Caco-2 (cell line): ENCODE measurements at regions of chr6 and their contacts with region 1.

Region 1: DNA sequence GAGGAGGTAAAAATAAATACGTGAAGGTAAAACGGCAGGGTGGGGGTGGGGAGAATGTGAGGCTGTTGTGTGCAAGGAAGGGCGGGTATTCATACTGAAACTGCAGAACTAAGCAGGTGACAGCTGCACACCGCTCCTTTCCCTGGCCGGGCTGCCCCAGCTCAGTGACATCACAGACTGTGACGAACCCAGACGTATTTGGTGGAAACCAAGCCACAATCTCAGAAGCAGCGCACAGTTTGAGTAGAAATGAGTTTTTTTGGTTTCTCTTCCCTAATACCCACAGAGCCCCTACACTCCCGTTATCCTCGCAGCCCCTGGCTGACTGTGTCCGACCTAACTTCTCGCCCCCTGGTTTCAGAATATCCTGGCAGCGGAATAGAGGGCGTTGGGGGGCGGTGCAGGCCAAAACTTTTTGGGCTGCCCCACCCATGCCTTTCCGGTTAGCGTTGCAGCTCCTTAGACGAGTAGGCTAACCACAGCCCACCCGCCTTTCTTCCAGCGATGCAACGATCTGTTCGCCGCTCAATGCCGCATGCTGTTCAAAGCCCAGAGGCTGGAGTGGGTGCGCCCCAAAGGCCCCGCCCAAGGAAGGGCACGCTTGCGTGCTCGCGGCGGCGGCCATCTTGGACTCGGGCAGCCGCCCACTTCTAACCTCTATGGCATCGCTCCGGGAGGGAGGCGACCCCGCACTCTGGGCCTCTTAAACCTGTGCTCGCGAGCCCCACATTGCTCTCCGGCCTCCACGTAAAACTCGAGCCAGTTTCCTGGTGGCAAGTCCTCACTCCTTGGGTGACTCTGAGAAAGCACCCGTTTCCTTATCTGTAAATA is 9.1 kb downstream of the BAK1 start:
- DNase-seq: peak; percentile 73 to 82
- H3K4me3 ChIP-seq: peak overlapping the region; percentile 77
- H3K4me3 Mint-ChIP-seq: peak overlapping the region; percentile 98
- H3K27ac Mint-ChIP-seq: peak overlapping the region; percentile 96
- H3K4me1 ChIP-seq: no peaks in the 10 kb centered on the region
- H3K4me1 Mint-ChIP-seq: peaks cover 6% of the 10 kb centered on the region
- H3K27me3 ChIP-seq: no peaks in the 10 kb centered on the region
- H3K27me3 Mint-ChIP-seq: no peaks in the 10 kb centered on the region
- CTCF ChIP-seq: no peak

Region 2: DNA sequence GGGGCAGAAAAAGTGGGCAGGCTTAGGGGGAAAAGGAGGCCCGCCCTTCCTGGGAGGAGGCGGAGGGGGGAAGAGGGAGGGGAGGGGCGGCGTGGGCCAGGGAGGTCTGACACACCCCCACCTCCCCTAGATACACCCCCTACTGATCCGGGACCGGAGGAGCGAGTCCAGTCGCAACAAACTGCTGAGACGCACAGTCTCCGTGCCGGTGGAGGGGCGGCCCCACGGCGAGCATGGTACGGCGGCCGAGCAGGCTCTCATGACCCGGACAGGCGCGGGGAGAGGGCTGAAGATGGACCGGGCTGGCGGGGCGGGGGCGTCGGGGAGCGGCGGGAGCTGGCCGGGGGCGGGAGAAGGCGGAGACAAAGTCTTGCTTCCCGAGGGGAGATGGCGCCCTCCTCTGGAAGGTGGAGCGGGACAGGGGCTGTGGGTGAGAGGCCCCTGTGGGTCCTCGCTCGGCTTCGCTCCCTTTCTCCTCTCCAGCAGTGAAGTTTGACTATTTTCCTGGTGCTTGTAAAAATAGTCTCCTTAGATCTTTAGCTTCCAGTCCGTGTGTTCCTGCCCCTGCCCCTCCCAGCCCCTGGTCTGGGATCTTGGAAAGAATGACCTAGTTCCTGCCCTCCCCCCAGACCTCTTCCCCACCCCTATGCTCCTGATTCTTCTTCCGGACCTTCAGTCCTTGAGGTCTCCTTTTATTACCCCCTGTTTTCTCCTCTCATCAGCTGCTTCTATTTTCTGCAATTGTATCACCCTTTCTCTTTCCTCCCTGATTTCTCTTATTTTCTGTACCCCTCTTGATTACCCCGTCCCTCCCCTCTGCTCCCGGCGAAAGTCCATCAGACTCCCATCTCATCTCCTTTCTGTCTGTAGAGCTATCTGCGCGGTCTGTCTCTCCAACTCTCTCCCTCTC is 145.1 kb before region 1 on chr6:
- CTCF ChIA-PET with region 1: no interaction called
- POLR2A ChIA-PET with region 1: no interaction called
- intact Hi-C with region 1: loop called (anchors 5 kb)
- DNase-seq: peak; percentile 91 to 93
- H3K4me3 ChIP-seq: peak overlapping the region; percentile 71
- H3K4me3 Mint-ChIP-seq: peak overlapping the region; percentile 81
- H3K27ac Mint-ChIP-seq: peak overlapping the region; percentile 75
- H3K4me1 ChIP-seq: peaks cover 39% of the 10 kb centered on the region
- H3K4me1 Mint-ChIP-seq: peaks cover 23% of the 10 kb centered on the region
- H3K27me3 ChIP-seq: no peaks in the 10 kb centered on the region
- H3K27me3 Mint-ChIP-seq: peaks cover 7% of the 10 kb centered on the region
- CTCF ChIP-seq: peak; percentile 74 to 82

Region 3: DNA sequence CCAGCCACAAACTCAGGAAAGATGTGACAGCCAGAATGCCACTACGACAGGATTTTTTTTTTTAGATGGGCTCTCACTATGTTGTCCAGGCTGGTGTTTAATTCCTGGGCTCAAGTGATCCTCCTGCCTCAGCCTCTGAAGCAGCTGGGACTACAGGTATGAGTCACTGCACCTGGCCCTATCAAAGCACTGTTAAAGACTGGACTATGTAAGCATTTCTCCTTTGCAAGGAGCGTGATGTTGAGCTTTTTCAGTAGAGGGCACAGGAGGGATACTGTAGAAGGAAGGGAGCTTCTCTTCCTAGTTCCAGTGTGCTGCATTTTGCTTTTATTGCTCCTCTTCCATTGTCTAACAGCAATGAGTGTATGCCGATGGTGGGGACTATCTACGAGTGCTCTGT is 80.8 kb before region 1 on chr6:
- CTCF ChIA-PET with region 1: interaction called, 3 read pairs
- POLR2A ChIA-PET with region 1: no interaction called
- intact Hi-C with region 1: loop called (anchors 1 kb)
- DNase-seq: peak; percentile 48 to 53
- H3K4me3 ChIP-seq: no peak overlapping the region
- H3K4me3 Mint-ChIP-seq: no peak overlapping the region
- H3K27ac Mint-ChIP-seq: no peak overlapping the region
- H3K4me1 ChIP-seq: peaks cover 8% of the 10 kb centered on the region
- H3K4me1 Mint-ChIP-seq: peaks cover 17% of the 10 kb centered on the region
- H3K27me3 ChIP-seq: no peaks in the 10 kb centered on the region
- H3K27me3 Mint-ChIP-seq: no peaks in the 10 kb centered on the region
- CTCF ChIP-seq: peak in 1 of 2 experiments; percentile 26

Region 4: GRCh38 chr6:33508935-33509926 is 61.8 kb before region 1 on chr6:
- CTCF ChIA-PET with region 1: no interaction called
- POLR2A ChIA-PET with region 1: interaction called, 9 read pairs
- intact Hi-C with region 1: loop called (anchors 2 kb)
- DNase-seq: no peak
- H3K4me3 ChIP-seq: no peak overlapping the region
- H3K4me3 Mint-ChIP-seq: no peak overlapping the region
- H3K27ac Mint-ChIP-seq: peak overlapping the region; percentile 35
- H3K4me1 ChIP-seq: peaks cover 21% of the 10 kb centered on the region
- H3K4me1 Mint-ChIP-seq: peaks cover 26% of the 10 kb centered on the region
- H3K27me3 ChIP-seq: no peaks in the 10 kb centered on the region
- H3K27me3 Mint-ChIP-seq: no peaks in the 10 kb centered on the region
- CTCF ChIP-seq: no peak